Left cardiac atrium (tissue), 4 donors: ENCODE measurements at regions of chr7 and their contacts with region 1.

Region 1: DNA sequence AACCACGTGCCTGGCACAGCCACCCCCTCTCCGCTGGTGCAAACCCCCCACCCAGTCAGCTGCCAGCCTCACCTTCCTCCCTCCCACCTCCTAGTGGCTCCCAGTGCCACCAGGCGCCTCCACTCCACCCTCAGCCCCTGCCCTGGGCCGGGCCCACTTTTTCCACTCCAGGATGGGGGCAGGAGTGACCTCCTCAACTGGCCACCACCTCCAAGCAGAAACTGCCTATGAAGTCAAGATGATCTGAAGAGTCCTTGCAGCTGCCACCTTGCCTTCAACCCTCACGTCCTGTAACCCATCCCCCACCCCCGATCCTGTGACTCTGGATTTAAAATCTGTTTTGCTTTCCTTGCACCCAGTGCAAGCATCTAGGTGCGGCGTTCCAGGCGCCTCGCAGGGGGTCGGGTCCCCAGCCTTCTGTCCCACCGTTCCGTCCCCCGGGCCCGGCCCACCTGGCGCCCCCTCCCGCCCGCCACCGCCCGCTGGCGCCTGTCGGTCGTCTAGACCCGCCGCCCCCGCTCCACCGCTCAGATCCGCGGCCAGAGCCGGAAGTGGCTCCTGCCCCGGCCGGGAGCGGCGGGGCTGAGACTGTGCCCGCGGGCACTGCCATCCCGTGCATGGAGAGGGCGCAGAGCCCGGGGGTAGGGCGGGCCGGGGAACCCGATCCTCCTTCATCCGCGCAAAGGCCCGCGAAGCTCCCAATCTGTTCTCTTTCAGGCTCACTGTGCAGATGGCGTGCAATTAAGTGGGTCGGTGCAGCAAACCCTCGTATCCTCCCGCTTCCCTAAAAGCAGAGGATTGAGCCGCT is 51.2 kb upstream of the GTF2I start:
- DNase-seq: peak; percentile 44
- ATAC-seq: peak; percentile 83 to 85

Region 2: GRCh38 chr7:74466196-74466813 is 140.0 kb before region 1 on chr7:
- intact Hi-C with region 1: no loop called
- DNase-seq: peak; percentile 67
- ATAC-seq: peak; percentile 48 to 75

Region 3: GRCh38 chr7:74656837-74657691 is 50.8 kb after region 1 on chr7:
- intact Hi-C with region 1: loop called in 1 of 2 experiments (anchors 10 kb)
- DNase-seq: peak; percentile 100
- ATAC-seq: peak; percentile 93 to 95